RWPE1 (cell line): ENCODE measurements at regions of chr7 and their contacts with region 1.

Region 1: GRCh38 chr7:21253740-21254687 is 173.9 kb upstream of the SP4 start:
- DNase-seq: peak; percentile 53
- H3K27ac ChIP-seq: no peak overlapping the region
- CTCF ChIP-seq: peak; percentile 71

Region 2: DNA sequence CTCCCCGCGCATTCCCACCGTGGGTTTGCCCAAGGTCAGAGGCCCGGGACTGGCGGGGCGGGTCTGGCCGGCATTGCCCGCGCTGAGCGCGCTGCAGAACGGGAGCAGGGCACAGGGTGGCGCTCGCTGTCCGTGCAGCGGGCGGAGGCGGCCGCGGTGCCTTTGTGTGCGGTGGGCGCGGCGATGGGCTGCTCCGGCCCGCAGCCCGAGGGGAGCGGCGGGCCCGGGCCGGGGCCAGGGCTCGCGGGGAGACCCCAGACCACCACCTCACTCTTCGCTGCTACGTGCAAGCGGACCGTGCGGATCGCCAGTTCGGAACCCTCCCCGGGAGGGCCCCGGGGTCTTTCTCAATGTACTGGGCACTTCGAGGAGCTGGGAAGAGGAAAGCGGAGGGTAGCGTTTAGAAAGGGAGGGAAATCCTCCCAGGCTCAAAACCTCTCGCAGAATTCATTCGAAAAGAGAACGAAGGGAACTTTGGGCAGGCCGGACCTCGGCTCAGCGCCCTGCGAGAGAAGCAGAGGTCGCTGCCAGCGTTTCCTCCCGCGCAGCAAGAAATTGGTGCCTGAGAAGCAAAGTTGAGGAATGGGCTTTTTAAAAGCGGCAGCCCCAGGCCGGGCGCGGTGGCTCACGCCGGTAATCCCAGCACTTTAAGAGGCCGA is 475.8 kb before region 1 on chr7:
- CTCF ChIA-PET with region 1: interaction called, 10 read pairs
- POLR2A ChIA-PET with region 1: no interaction called
- DNase-seq: no peak
- H3K27ac ChIP-seq: no peak overlapping the region
- CTCF ChIP-seq: peak; percentile 82

Region 3: GRCh38 chr7:21365866-21366624 is 112.0 kb after region 1 on chr7:
- CTCF ChIA-PET with region 1: no interaction called
- POLR2A ChIA-PET with region 1: no interaction called
- DNase-seq: peak; percentile 79
- H3K27ac ChIP-seq: no peak overlapping the region
- CTCF ChIP-seq: no peak

Region 4: DNA sequence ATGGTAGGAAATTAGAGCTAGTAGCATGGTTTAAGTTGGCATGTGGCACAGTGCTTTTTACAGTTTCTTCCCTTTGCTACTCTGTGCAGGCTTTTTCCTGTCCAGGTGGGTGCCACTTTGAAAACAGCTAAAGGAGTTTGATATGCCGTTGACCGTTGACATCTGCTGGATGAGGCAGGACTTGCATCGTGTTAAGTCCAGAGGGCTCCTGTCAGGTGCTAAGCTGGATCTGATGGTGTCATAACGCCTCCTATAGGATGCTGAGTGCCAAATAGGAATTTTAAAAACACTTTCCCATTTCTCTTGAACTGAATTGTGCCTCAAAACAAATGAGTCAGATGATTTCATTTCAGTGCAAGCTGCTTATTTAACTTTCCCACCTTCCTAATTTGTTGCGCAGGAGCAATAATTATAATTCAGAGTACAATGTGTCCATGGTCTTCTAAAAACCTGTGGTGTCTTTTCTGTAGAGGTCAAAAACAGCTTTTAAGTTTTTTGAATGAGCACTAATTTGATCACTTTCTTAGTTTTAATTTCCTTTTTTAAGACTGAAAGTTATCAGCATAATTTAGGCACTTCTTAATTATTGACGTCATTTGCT is 513.4 kb after region 1 on chr7:
- CTCF ChIA-PET with region 1: interaction called, 51 read pairs
- POLR2A ChIA-PET with region 1: no interaction called
- DNase-seq: peak; percentile 83
- H3K27ac ChIP-seq: no peak overlapping the region
- CTCF ChIP-seq: peak; percentile 84